ENCODE measurements at regions of chr9 and their contacts with region 1.

Region 1: DNA sequence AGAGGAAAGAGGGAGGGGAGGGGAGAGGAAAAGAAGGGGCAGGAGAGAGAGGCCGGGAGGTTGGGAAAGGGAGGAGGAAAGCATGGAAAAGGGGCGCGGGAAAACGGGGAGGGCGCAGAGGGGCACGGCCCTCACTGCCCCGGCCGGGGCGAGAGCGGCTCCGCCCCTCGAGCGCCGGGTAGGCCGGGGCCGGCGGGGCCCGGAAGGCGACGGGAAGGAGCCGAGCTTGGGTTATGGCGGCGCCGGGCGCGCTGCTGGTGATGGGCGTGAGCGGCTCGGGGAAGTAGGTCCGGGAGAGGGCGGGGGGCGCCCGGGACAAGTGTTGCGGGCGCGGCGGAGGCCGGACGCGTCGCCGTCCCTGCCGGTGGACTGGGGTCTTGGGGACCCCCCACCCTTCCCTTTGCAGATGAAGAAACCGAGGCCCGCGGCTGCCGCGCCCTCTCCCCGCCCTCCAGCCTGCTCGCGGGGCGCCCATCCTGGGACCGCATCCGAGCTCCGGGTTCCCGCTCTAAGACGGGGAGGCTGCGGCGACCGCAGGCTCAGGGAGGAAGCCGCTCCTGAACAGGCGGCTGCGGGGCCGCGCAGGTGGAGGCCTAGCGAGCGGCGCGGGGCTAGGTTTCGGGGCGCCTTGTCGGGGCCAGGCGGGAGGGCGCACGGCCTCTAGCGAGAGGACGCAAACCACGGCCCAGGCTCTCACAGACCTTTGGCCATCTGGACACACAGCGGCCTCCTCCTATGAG is at the start of gene IDNK:
- DNase-seq: peak; percentile 49 to 76 (median 60)
- H3K4me3 ChIP-seq: peak within 1 kb of the TSS; percentile 72
- H3K4me3 Mint-ChIP-seq: peak within 1 kb of the TSS; percentile 87 to 98 (median 92)
- H3K27ac ChIP-seq: peak within 1 kb of the TSS; percentile 84
- H3K27ac Mint-ChIP-seq: peak within 1 kb of the TSS; percentile 90 to 99 (median 96)
- H3K4me1 ChIP-seq: peaks cover 18% of the 10 kb centered on the region
- H3K4me1 Mint-ChIP-seq: peaks cover 33 to 43% (median 36%) of the 10 kb centered on the region in 3 donors
- H3K27me3 ChIP-seq: no peaks in the 10 kb centered on the region
- H3K27me3 Mint-ChIP-seq: no peaks in the 10 kb centered on the region
- total RNA-seq, gene IDNK: 5.9 to 6.3 TPM

Region 2: DNA sequence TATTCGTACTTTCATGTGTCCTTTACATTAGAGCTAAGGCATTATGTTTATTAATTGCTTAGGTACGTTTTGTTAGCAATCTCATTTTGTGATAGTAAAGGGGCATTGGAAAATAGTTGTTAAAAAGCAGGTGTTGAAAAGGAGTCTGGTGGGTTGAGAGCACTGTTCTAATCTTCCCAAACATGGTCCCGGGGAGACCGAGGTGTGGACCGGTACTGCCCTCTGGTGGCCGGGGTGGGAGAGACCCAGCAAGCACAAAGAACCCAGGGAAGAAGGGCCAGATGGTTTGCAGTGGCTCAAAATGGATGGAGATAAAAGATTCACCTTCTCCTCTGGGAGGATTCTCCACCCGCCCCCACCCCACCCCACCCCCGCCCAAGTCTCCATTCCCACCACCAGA is 26.0 kb after region 1 on chr9:
- CTCF ChIA-PET with region 1: interaction called, 36 read pairs
- POLR2A ChIA-PET with region 1: interaction called, 4 read pairs
- DNase-seq: peak; percentile 57 to 79 (median 65)
- H3K4me3 ChIP-seq: no peak overlapping the region
- H3K4me3 Mint-ChIP-seq: no peak overlapping the region
- H3K27ac ChIP-seq: no peak overlapping the region
- H3K27ac Mint-ChIP-seq: peak overlapping the region in 1 of 8 donors; percentile 24
- H3K4me1 ChIP-seq: no peaks in the 10 kb centered on the region
- H3K4me1 Mint-ChIP-seq: no peaks in the 10 kb centered on the region
- H3K27me3 ChIP-seq: no peaks in the 10 kb centered on the region
- H3K27me3 Mint-ChIP-seq: no peaks in the 10 kb centered on the region

Region 3: DNA sequence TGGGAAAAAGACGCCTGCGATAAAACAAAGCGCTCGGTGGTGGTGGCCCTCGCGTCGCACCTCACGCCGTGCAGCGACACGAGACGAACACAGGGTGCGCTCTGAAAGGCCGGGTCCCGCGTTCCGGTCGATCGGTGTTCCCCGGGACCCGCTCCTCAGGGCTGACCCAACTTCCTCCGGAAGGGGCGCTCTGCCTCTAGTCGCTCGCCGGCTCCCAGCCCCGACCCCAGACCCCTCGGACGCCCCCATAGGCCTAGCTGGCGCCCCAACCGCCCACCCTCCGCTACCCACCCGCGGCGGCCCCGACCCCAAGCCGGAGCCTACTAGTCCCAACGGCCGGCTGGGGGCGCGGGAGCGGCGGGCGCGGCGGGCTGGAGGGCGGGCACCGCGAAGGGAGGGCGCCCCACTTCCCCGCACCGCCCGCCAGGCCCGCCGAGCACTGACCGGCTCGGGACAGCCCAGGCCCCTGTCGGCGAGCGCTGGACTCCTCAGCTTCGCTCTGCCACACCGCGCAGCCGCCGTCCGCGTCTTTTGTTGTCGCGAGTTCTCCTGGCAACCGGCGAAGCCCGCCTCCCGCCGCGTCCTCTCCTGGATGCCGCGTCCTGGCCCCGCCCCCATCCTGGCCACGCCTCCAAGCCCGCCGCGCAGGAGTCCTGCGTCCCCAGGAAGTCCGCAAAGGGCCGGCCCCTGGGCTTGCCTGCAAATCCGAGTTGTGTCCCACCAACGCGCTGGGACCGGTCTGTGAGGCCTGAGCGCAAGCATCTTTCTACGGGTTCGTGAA is 298.0 kb after region 1 on chr9 and contains the start of gene KIF27:
- CTCF ChIA-PET with region 1: interaction called, 11 read pairs
- POLR2A ChIA-PET with region 1: interaction called, 3 read pairs
- DNase-seq: peak; percentile 94 to 98 (median 95)
- H3K4me3 ChIP-seq: peak within 1 kb of the TSS; percentile 48
- H3K4me3 Mint-ChIP-seq: peak within 1 kb of the TSS; percentile 89 to 96 (median 92)
- H3K27ac ChIP-seq: peak within 1 kb of the TSS; percentile 87
- H3K27ac Mint-ChIP-seq: peak within 1 kb of the TSS; percentile 95 to 98 (median 97)
- H3K4me1 ChIP-seq: no peaks in the 10 kb centered on the region
- H3K4me1 Mint-ChIP-seq: peaks cover 14 to 25% (median 16%) of the 10 kb centered on the region in 3 donors
- H3K27me3 ChIP-seq: no peaks in the 10 kb centered on the region
- H3K27me3 Mint-ChIP-seq: no peaks in the 10 kb centered on the region
- total RNA-seq, gene KIF27: 2.8 to 3.2 TPM